H1 (cell line): ENCODE measurements at regions of chr3 and their contacts with region 1.

Region 1: GRCh38 chr3:42831321-42831713 is 22.1 kb downstream of the ACKR2 start:
- DNase-seq: peak; percentile 78 to 95
- H3K4me3 ChIP-seq: no peak overlapping the region
- H3K27ac ChIP-seq: no peak overlapping the region
- H3K4me1 ChIP-seq: peaks cover 0 to 3% (median 2%) of the 10 kb centered on the region in 4 experiments; a peak in 3 of 7 replicates
- H3K27me3 ChIP-seq: no peaks in the 10 kb centered on the region
- CTCF ChIP-seq: peak; percentile 57 to 87 (median 86)
- EP300 ChIP-seq: no peak
- POLR2A ChIP-seq: no peak
- RAD21 ChIP-seq: peak; percentile 76 to 81

Region 2: GRCh38 chr3:42790714-42791229 is 40.5 kb before region 1 on chr3:
- CTCF ChIA-PET with region 1: interaction called, 13 read pairs
- POLR2A ChIA-PET with region 1: no interaction called
- DNase-seq: no peak
- H3K4me3 ChIP-seq: no peak overlapping the region
- H3K27ac ChIP-seq: no peak overlapping the region
- H3K4me1 ChIP-seq: peaks cover 0 to 3% (median 0%) of the 10 kb centered on the region in 4 experiments; a peak in 2 of 7 replicates
- H3K27me3 ChIP-seq: no peaks in the 10 kb centered on the region
- CTCF ChIP-seq: no peak
- EP300 ChIP-seq: no peak
- POLR2A ChIP-seq: no peak
- RAD21 ChIP-seq: no peak

Region 3: DNA sequence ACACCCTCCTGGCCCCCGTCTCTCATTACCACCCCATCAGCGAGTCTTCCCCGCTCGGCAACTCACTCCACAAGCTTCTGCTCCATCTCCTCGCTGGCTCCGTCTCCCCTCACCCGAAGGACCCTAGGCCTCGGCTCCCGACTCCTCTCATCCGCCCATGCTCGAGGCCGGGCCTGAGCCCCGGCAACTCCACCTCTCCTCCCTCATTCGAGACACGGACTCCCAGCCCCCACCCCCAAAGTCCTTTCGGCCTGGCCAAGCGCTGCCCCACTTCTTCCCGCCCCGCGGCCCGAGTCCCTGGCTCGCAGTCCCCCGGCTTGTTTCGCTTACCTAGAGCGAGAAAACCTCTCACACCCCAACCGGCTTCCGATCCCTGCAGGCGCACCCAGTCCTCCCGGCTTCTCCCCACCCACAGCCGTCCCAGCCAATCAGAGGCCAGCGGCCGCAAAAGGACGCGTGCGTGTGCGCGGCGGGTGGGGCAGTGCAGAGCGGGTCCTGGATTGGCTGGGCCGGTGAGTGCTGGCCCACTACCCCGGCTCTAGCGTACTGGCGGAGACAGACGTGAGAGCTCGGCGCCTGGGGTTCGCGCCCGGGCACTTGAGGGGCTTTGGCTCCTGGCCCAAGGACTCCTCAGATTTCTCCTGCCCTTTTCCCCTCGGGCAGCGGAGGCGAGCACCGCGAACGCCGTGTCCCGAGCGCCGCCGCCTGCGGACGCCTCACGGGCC is 27.0 kb before region 1 on chr3 and contains the start of gene HIGD1A:
- CTCF ChIA-PET with region 1: interaction called, 7 read pairs
- POLR2A ChIA-PET with region 1: interaction called, 13 read pairs
- DNase-seq: peak; percentile 87 to 93
- H3K4me3 ChIP-seq: peak within 1 kb of the TSS; percentile 85 to 96 (median 88)
- H3K27ac ChIP-seq: peak within 1 kb of the TSS; percentile 68
- H3K4me1 ChIP-seq: peaks cover 0 to 6% (median 4%) of the 10 kb centered on the region in 4 experiments; a peak in 4 of 7 replicates
- H3K27me3 ChIP-seq: peaks cover 0 to 9% (median 5%) of the 10 kb centered on the region in 4 experiments; a peak in 3 of 7 replicates
- CTCF ChIP-seq: no peak
- EP300 ChIP-seq: no peak; a peak in 1 of 3 replicates
- POLR2A ChIP-seq: peak; percentile 19 to 64; a peak in 2 of 3 replicates
- RAD21 ChIP-seq: no peak
- total RNA-seq, gene HIGD1A: 94.7 and 95.4 TPM in 2 replicates

Region 4: GRCh38 chr3:42852441-42852840 is 21.1 kb after region 1 on chr3:
- CTCF ChIA-PET with region 1: interaction called, 11 read pairs
- POLR2A ChIA-PET with region 1: no interaction called
- DNase-seq: no peak
- H3K4me3 ChIP-seq: no peak overlapping the region
- H3K27ac ChIP-seq: no peak overlapping the region
- H3K4me1 ChIP-seq: peaks cover 0 to 5% (median 0%) of the 10 kb centered on the region in 4 experiments; a peak in 2 of 7 replicates
- H3K27me3 ChIP-seq: no peaks in the 10 kb centered on the region
- CTCF ChIP-seq: no peak
- EP300 ChIP-seq: no peak
- POLR2A ChIP-seq: no peak
- RAD21 ChIP-seq: no peak

Region 5: DNA sequence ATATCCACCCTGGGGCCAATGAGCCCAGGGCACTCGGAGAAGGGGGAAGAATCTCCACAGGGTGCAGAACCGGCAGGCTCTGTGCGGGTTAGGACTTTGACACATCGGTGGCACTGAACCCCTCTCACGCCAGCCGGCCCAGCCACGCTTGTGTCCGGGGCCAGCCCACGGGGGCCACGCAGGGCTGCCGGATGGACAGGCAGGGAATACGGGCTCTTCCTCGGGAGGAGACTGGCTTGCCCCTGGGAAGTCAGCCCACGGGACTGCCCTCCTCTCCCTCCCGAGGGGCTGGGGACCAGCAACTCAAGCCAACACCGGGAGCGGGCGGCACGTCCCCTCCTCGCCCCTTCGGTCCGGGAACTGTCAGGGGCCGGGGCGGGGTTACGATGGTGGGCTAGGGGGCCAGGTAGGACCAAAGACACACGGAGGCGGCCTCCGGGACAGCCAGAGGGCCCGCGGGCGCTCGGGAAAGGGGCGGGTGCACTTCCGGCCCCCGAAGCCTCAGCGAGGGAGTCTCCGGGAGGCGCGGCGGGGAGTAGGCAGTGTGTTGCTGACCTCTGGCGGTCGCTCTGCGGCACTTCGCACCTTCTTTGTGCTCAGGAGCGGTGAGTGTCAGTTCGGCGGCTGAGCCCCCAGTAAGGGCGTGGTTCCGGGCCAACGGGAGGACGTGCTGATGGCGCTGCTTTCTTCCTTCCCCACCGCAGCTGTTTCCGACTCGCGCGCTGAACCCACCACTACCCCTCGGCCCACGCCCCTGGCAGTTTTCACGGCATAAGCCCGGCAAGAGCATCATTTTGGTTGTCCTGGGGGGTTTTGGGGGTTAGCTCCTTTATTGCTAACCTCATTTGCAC is 49.5 kb after region 1 on chr3:
- CTCF ChIA-PET with region 1: interaction called, 19 read pairs
- POLR2A ChIA-PET with region 1: interaction called, 3 read pairs
- DNase-seq: peak; percentile 74 to 86
- H3K4me3 ChIP-seq: peak overlapping the region; percentile 16 to 63 (median 44); a peak in 7 of 8 replicates
- H3K27ac ChIP-seq: no peak overlapping the region
- H3K4me1 ChIP-seq: peaks cover 3 to 12% (median 7%) of the 10 kb centered on the region in 4 experiments; a peak in 4 of 7 replicates
- H3K27me3 ChIP-seq: no peaks in the 10 kb centered on the region
- CTCF ChIP-seq: peak; percentile 86 to 91 (median 87)
- EP300 ChIP-seq: 0 out of 3 replicates have a peak, but pooled peaks of 1 of the 2 experiments have one; percentile 11
- POLR2A ChIP-seq: peak in 1 of 2 experiments; percentile 42; a peak in 1 of 3 replicates
- RAD21 ChIP-seq: peak; percentile 86 to 88